ENCODE measurements at regions of chr15 and their contacts with region 1.

Region 1: GRCh38 chr15:65869127-65869953 is at the start of gene RAB11A:
- DNase-seq: peak; percentile 97
- ATAC-seq: peak; percentile 92
- H3K4me3 Mint-ChIP-seq: peak within 1 kb of the TSS; percentile 99
- H3K27ac Mint-ChIP-seq: peak within 1 kb of the TSS; percentile 91
- H3K4me1 Mint-ChIP-seq: peaks cover 30% of the 10 kb centered on the region
- H3K27me3 Mint-ChIP-seq: no peaks in the 10 kb centered on the region
- total RNA-seq, gene RAB11A: 129 to 142 TPM

Region 2: DNA sequence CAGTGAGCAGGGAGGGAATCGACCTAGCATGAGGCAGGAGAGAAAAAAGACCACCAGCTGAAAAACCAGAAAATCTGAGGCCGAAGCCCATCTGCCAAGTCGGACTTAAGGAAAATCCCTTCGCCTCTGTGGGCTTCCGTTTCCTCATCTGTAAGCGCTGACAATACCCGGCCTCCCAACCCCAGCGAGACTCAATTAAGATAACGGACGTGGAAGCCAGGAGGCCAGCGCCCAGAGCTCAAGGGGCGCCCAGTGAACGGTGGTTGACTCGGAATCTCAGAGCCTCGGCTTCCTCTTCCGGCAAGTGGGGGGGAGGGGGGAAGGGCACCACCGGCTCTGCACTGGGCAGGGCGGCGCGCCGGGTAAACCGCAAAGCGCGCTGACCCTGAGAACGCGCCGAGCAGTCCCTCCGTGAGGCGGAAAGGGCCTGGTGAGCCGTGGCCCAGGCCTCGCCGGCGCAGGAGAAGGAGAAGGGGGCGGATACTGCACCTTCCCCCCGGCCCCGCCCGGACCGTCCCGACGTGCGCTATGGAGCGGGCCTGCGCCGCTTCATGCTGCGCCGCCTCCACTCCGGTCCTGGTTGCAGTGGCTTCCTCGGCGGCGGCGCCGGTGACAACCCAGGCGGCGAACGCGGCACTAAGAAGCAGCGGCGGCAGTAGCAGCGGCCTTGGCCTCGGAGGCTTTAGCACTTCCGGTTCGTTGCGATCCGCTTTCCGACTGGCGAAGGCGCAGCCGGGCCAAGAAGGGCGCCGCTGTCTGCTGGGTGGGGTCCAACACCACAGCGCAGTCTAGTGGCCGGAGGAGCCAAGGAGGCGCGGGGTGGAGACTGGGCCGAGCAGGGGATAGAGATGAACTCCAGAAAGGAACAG is 352.1 kb before region 1 on chr15 and contains the start of gene DPP8:
- CTCF ChIA-PET with region 1: no interaction called
- POLR2A ChIA-PET with region 1: no interaction called
- intact Hi-C with region 1: loop called in 1 of 2 experiments (anchors 1 kb)
- DNase-seq: peak; percentile 97
- ATAC-seq: peak; percentile 97
- H3K4me3 Mint-ChIP-seq: peak within 1 kb of the TSS; percentile 91
- H3K27ac Mint-ChIP-seq: peak within 1 kb of the TSS; percentile 88
- H3K4me1 Mint-ChIP-seq: peaks cover 36% of the 10 kb centered on the region
- H3K27me3 Mint-ChIP-seq: no peaks in the 10 kb centered on the region
- total RNA-seq, gene DPP8: 25.8 to 26.4 TPM

Region 3: GRCh38 chr15:65792130-65792987 is 77.0 kb before region 1 on chr15 and contains the start of gene DENND4A:
- CTCF ChIA-PET with region 1: interaction called, 4 read pairs
- POLR2A ChIA-PET with region 1: interaction called, 7 read pairs
- intact Hi-C with region 1: loop called (anchors 1 kb)
- DNase-seq: peak; percentile 99
- ATAC-seq: peak; percentile 80
- H3K4me3 Mint-ChIP-seq: peak within 1 kb of the TSS; percentile 80
- H3K27ac Mint-ChIP-seq: peak within 1 kb of the TSS; percentile 98
- H3K4me1 Mint-ChIP-seq: peaks cover 60% of the 10 kb centered on the region
- H3K27me3 Mint-ChIP-seq: no peaks in the 10 kb centered on the region
- total RNA-seq, gene DENND4A: 35.6 to 43.5 TPM

Region 4: DNA sequence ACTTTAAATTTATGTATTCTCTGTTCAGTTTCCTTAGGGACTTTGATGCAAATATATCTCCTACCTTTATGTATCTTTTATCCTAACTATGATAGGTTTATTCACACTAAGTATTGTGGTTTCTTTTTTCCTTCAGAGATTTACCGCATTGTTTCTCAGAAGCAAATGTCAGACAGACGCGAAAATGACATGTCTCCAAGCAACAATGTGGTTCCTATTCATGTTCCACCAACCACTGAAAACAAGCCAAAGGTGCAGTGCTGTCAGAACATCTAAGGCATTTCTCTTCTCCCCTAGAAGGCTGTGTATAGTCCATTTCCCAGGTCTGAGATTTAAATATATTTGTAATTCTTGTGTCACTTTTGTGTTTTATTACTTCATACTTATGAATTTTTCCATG is 18.2 kb after region 1 on chr15:
- CTCF ChIA-PET with region 1: interaction called, 6 read pairs
- POLR2A ChIA-PET with region 1: interaction called, 8 read pairs
- intact Hi-C with region 1: loop called (anchors 1 to 2 kb)
- DNase-seq: peak; percentile 67
- ATAC-seq: peak; percentile 94
- H3K4me3 Mint-ChIP-seq: no peak overlapping the region
- H3K27ac Mint-ChIP-seq: peak overlapping the region; percentile 82
- H3K4me1 Mint-ChIP-seq: peaks cover 78% of the 10 kb centered on the region
- H3K27me3 Mint-ChIP-seq: no peaks in the 10 kb centered on the region

Region 5: DNA sequence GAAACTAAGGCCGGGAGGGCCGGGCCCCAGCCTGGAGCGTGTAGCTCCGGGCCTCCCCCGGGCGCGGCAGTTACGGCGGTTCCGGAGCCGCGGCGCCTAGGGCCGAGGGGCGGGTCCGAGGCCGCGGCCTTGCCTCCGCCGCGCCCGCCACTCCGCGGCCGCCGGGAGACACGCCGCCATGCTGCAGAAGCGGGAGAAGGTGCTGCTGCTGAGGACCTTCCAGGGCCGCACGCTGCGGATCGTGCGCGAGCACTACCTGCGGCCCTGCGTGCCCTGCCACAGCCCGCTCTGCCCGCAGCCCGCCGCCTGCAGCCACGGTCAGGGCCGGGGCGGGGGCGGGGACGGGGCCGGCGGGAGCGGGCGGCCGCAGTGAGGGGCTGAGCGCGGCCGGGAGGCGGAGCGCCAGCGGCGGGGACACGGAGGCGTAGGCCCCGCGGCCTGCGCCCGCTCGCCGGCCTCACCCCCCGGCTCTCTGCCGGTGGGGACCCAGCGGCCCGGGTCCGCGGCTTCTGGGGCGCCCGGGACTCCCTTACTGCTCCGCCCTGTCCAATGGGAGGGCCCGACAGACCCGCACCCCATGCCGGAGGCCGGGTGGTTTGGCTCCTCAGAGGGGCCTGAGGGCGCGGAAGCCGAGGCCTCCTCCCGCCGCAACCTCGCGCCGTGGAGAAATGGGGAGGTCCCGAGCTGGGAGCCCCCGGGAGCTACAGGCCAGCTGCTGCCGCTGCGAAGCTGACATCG is 424.2 kb after region 1 on chr15 and contains the start of gene DIS3L:
- CTCF ChIA-PET with region 1: no interaction called
- POLR2A ChIA-PET with region 1: no interaction called
- intact Hi-C with region 1: loop called (anchors 1 to 2 kb)
- DNase-seq: peak; percentile 75
- ATAC-seq: peak; percentile 80
- H3K4me3 Mint-ChIP-seq: peak within 1 kb of the TSS; percentile 86
- H3K27ac Mint-ChIP-seq: peak within 1 kb of the TSS; percentile 90
- H3K4me1 Mint-ChIP-seq: peaks cover 49% of the 10 kb centered on the region
- H3K27me3 Mint-ChIP-seq: no peaks in the 10 kb centered on the region
- total RNA-seq, gene DIS3L: 24.6 to 25.9 TPM

Region 6: GRCh38 chr15:66497502-66498455 is 628.4 kb after region 1 on chr15 and contains the start of gene SNAPC5:
- CTCF ChIA-PET with region 1: no interaction called
- POLR2A ChIA-PET with region 1: no interaction called
- intact Hi-C with region 1: loop called in 1 of 2 experiments (anchors 5 kb)
- DNase-seq: peak; percentile 99
- ATAC-seq: peak; percentile 90
- H3K4me3 Mint-ChIP-seq: peak within 1 kb of the TSS; percentile 85
- H3K27ac Mint-ChIP-seq: peak within 1 kb of the TSS; percentile 93
- H3K4me1 Mint-ChIP-seq: peaks cover 56% of the 10 kb centered on the region
- H3K27me3 Mint-ChIP-seq: no peaks in the 10 kb centered on the region
- total RNA-seq, gene SNAPC5: 25.7 to 30.1 TPM